Caco-2 (cell line): ENCODE measurements at regions of chr5 and their contacts with region 1.

Region 1: GRCh38 chr5:162128117-162128516 is 60.5 kb downstream of the GABRG2 start:
- DNase-seq: no peak
- H3K4me3 ChIP-seq: no peak overlapping the region
- H3K4me3 Mint-ChIP-seq: no peak overlapping the region
- H3K27ac Mint-ChIP-seq: no peak overlapping the region
- H3K4me1 ChIP-seq: no peaks in the 10 kb centered on the region
- H3K4me1 Mint-ChIP-seq: no peaks in the 10 kb centered on the region
- H3K27me3 ChIP-seq: no peaks in the 10 kb centered on the region
- H3K27me3 Mint-ChIP-seq: no peaks in the 10 kb centered on the region
- CTCF ChIP-seq: no peak

Region 2: GRCh38 chr5:162196351-162196750 is 68.2 kb after region 1 on chr5:
- CTCF ChIA-PET with region 1: no interaction called
- POLR2A ChIA-PET with region 1: no interaction called
- intact Hi-C with region 1: loop called (anchors 2 kb)
- DNase-seq: no peak
- H3K4me3 ChIP-seq: no peak overlapping the region
- H3K4me3 Mint-ChIP-seq: no peak overlapping the region
- H3K27ac Mint-ChIP-seq: no peak overlapping the region
- H3K4me1 ChIP-seq: no peaks in the 10 kb centered on the region
- H3K4me1 Mint-ChIP-seq: no peaks in the 10 kb centered on the region
- H3K27me3 ChIP-seq: no peaks in the 10 kb centered on the region
- H3K27me3 Mint-ChIP-seq: no peaks in the 10 kb centered on the region
- CTCF ChIP-seq: no peak